Esophagus muscularis mucosa (tissue), 4 donors: ENCODE measurements at regions of chr2 and their contacts with region 1.

Region 1: GRCh38 chr2:190369635-190370034 is 26.2 kb downstream of the INPP1 start:
- DNase-seq: no peak
- H3K4me3 ChIP-seq: no peak overlapping the region
- H3K27ac ChIP-seq: peak overlapping the region in 1 of 4 donors; percentile 5
- H3K4me1 ChIP-seq: peaks cover 0 to 9% (median 7%) of the 10 kb centered on the region in 4 donors
- H3K27me3 ChIP-seq: no peaks in the 10 kb centered on the region
- CTCF ChIP-seq: no peak
- EP300 ChIP-seq: no peak
- POLR2A ChIP-seq: no peak

Region 2: GRCh38 chr2:190088917-190089316 is 280.7 kb before region 1 on chr2:
- intact Hi-C with region 1: loop called (anchors 5 kb)
- DNase-seq: no peak
- H3K4me3 ChIP-seq: no peak overlapping the region
- H3K27ac ChIP-seq: no peak overlapping the region
- H3K4me1 ChIP-seq: no peaks in the 10 kb centered on the region
- H3K27me3 ChIP-seq: no peaks in the 10 kb centered on the region
- CTCF ChIP-seq: peak; percentile 65 to 68 (median 68)
- EP300 ChIP-seq: no peak
- POLR2A ChIP-seq: no peak

Region 3: GRCh38 chr2:190119257-190119656 is 250.4 kb before region 1 on chr2:
- intact Hi-C with region 1: no loop called
- DNase-seq: no peak
- H3K4me3 ChIP-seq: peak overlapping the region in 2 of 4 donors; percentile 25 to 33
- H3K27ac ChIP-seq: no peak overlapping the region
- H3K4me1 ChIP-seq: peaks cover 0 to 5% (median 0%) of the 10 kb centered on the region in 4 donors
- H3K27me3 ChIP-seq: no peaks in the 10 kb centered on the region
- CTCF ChIP-seq: no peak
- EP300 ChIP-seq: no peak
- POLR2A ChIP-seq: no peak

Region 4: DNA sequence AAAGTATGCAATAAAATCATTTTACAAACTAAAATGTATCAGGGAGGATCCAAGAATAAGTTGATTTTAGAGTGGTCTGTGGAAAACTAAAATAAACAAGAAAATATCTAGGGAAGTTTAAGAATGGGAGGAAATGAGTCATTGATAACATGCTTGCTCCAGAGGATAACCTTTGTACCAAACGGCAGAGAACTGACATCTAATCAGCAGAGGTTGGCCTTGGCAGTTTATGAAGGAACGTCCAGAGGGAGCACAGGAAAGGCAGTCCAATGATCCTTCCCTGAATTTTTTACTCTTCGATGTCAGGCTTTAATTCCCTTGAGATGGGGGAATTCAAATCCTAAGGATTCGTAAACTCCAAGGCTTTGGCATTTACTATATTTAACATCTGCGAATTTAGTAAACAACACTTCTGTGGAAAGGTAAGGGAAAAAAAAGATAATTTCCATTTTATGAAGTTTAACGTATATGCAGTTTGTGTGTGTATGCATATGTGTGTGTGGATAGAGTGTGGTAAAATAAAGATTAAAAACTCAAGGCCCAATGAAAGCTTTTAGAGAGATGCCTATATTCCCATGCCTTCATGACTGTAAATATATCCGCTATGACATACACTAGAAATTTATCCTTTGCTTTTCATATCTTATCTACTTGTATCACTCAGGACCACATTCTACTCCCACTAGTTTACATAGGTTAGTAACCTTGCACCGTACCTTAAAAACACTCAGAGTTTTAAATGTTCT is 35.0 kb before region 1 on chr2:
- intact Hi-C with region 1: loop called (anchors 5 kb)
- DNase-seq: no peak
- H3K4me3 ChIP-seq: no peak overlapping the region
- H3K27ac ChIP-seq: peak overlapping the region in 1 of 4 donors; percentile 45
- H3K4me1 ChIP-seq: peaks cover 0 to 9% (median 4%) of the 10 kb centered on the region in 4 donors
- H3K27me3 ChIP-seq: no peaks in the 10 kb centered on the region
- CTCF ChIP-seq: no peak
- EP300 ChIP-seq: no peak
- POLR2A ChIP-seq: no peak

Region 5: DNA sequence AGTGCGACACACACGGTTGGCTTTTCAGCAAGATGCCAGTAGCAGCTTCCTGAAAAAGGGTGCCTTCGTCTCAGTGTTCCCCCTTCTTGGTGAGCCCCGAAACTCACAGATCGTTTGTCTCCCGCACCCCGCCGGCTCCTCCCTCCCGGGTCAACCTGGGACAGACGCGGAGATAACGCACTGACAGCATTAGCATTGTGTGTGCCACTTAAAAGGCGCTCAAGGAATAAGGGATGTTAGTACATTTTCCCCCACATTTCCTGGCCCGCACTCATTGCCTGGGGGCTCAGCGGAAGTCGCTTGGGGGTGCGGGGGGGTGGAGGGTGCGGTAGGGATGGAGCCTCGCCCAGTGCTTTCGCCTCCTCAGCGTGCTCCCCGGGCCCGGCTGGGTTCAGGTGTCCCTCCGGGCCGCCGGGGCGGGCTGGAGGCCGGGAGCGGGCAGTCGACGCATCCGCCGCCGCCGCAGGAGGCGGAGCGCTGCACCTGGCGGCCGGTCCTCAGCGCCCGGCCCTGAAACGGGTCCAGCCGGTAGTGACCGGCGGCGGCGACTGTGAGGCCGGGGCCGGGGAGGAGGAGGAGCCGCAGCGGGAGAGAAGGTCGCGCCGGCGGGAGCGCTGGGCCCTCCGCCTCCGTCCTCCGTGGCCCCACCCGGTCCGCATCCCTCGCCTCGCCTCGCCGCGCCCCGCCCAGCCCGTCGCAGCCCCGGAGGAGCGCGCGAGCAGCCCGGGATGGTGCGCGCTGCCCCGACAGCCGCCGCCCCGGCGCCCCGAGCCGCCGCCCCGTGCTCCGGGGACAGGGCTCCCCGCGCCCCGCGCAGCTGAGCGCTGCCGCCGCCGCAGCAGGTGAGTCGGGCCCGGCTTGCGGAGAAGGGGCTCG is 38.3 kb after region 1 on chr2 and contains the start of gene MFSD6:
- intact Hi-C with region 1: no loop called
- DNase-seq: no peak
- H3K4me3 ChIP-seq: peak within 1 kb of the TSS; percentile 86 to 92 (median 90)
- H3K27ac ChIP-seq: peak within 1 kb of the TSS; percentile 87 to 92 (median 90)
- H3K4me1 ChIP-seq: peaks cover 13 to 47% (median 38%) of the 10 kb centered on the region in 4 donors
- H3K27me3 ChIP-seq: no peaks in the 10 kb centered on the region
- CTCF ChIP-seq: peak in 2 of 3 experiments; percentile 14 to 33
- EP300 ChIP-seq: no peak
- POLR2A ChIP-seq: no peak
- total RNA-seq, gene MFSD6: 145 to 180 (median 163) TPM